Activated naive CD4-positive, alpha-beta T cell treated with anti-CD3 and anti-CD28 coated beads for 36 hours (primary cell): ENCODE measurements at regions of chr5 and their contacts with region 1.

Region 1: DNA sequence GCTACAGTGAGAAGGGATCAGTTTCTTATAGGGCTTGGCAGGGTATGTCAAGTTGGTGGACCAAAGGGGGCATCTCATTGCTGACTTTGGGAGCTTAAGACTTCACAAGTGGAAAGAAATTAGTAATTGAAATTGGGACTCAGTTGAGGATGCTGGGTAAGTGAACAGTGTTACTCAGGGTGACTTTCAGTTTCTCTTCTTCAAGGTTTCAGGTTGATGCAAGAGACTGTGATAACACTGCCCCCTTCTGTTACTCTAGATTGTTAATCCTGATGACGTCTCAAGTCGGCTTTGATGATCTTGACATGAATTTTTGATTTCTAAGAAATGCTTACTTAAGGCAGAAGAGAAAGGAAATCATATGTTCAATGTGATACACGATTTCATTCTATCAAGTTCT is 21.3 kb downstream of the KCTD16 start:
- DNase-seq: peak; percentile 50
- H3K4me3 Mint-ChIP-seq: no peak overlapping the region
- H3K27ac Mint-ChIP-seq: no peak overlapping the region
- H3K4me1 Mint-ChIP-seq: peaks cover 30% of the 10 kb centered on the region
- H3K27me3 Mint-ChIP-seq: no peaks in the 10 kb centered on the region

Region 2: GRCh38 chr5:143008809-143009521 is 1183.0 kb before region 1 on chr5:
- CTCF ChIA-PET with region 1: no interaction called
- intact Hi-C with region 1: loop called (anchors 1 kb)
- DNase-seq: peak; percentile 95
- H3K4me3 Mint-ChIP-seq: no peak overlapping the region
- H3K27ac Mint-ChIP-seq: peak overlapping the region; percentile 85
- H3K4me1 Mint-ChIP-seq: peaks cover 56% of the 10 kb centered on the region
- H3K27me3 Mint-ChIP-seq: no peaks in the 10 kb centered on the region

Region 3: DNA sequence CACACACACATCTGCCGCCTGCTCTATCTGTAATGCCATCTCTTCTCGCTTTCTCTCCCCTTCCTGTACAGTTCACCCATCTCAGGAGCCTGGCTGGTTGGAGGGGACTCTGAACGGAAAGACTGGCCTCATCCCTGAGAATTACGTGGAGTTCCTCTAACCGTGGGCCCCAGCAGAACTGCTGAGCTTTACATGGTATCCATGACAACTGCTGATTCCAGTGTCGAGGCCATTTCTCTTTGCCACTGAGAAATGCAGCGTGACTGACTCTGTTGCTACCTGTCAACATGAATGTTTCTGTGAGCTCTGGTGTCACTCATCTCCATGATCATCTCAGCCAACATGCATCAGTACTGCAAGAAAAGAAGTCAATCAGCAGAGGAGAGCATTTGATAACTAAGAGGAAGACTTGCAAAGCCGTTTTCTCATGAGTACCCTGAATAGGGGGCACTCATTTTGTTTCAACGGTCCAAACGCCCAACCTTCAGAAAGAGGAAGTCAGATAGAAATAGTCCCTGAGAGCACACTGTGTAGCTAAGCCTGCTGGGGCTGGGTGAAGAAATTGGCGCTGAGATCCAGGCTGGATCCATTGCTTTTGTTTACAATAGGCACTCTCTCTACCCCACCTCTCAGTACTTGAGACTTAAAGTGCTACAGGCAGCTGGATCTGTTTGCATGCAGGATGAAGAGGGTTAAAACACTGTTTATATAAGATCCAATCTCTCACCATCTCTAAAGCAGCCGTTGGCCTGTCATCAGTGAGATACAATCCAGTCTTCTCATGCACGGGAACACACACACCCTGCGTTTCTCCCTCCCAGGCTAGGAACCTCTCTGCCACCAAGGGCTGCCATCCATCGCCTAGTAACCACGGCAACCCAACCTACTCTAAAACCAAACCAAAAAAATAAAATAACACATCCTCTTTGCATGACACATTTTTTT is 969.4 kb before region 1 on chr5:
- CTCF ChIA-PET with region 1: no interaction called
- intact Hi-C with region 1: loop called (anchors 5 kb)
- DNase-seq: peak; percentile 56
- H3K4me3 Mint-ChIP-seq: peak overlapping the region; percentile 15
- H3K27ac Mint-ChIP-seq: peak overlapping the region; percentile 78
- H3K4me1 Mint-ChIP-seq: peaks cover 39% of the 10 kb centered on the region
- H3K27me3 Mint-ChIP-seq: no peaks in the 10 kb centered on the region

Region 4: DNA sequence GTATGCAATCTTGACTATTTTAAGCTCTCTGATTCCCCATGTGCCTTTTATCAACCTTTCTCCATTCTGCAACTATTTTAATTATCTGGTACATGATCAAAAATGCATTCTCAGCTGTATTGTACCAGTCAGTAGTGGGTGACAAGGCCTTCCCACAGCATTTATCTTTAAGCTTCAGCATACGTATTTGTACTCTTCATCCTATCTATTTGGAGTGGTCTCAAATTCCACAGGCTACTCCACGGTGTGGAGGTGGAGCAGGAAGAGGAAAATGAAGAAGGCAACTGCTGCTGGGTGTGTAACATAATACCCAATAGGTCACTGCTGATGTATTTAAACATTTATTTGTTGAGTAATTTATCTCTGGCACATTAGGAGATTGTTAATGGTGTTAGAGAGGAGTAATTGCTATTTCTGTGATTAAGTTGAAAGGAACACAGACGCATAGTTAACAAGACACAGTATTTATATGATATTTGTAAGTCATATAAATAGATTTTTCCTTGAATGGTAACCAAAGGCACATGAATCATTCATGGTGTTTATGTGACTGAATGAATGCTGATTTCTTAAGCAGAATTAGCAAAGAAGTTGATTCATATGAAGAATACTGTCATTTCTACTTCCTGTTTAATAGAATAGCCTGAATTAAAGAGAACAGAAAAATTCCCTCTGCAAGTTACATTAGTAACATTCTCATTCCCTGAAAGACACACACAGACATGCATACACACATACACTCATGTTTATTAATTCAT is 634.8 kb before region 1 on chr5:
- CTCF ChIA-PET with region 1: no interaction called
- intact Hi-C with region 1: loop called (anchors 1 kb)
- DNase-seq: no peak
- H3K4me3 Mint-ChIP-seq: no peak overlapping the region
- H3K27ac Mint-ChIP-seq: no peak overlapping the region
- H3K4me1 Mint-ChIP-seq: peaks cover 6% of the 10 kb centered on the region
- H3K27me3 Mint-ChIP-seq: peaks cover 3% of the 10 kb centered on the region

Region 5: DNA sequence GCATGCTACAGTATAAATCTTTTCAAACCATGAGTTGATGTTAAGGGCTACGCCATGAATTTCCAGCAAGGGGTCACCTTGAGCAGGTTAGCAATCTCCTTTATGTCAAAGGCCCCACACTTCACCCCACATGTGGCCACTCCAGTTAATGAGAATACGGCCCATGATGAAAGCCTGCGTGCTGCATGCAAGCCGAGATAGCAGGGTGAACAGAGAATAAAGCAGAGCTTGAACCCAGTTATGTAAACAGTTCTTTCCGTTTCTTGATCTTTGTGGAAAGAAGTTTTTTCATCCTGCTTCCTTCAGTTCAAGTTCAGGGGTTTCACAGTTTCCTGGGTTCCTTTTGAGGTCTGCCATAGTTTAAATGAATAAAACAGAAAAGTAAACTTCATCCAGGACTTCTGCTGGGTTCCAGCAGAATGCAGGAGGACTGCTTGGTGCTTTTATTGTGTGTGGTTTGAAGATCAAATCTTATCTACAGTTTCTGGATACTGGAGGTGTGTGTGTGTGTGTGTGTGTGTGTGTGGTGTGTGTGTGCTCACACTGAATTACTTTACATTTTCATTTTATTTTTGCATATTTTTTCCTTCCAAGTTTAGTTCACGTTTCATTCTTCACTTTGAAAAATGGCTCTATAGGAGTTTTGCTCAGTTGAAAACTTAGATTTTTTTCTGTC is 292.9 kb before region 1 on chr5:
- CTCF ChIA-PET with region 1: interaction called, 3 read pairs
- intact Hi-C with region 1: loop called (anchors 2 kb)
- DNase-seq: no peak
- H3K4me3 Mint-ChIP-seq: no peak overlapping the region
- H3K27ac Mint-ChIP-seq: peak overlapping the region; percentile 42
- H3K4me1 Mint-ChIP-seq: peaks cover 32% of the 10 kb centered on the region
- H3K27me3 Mint-ChIP-seq: no peaks in the 10 kb centered on the region

Region 6: DNA sequence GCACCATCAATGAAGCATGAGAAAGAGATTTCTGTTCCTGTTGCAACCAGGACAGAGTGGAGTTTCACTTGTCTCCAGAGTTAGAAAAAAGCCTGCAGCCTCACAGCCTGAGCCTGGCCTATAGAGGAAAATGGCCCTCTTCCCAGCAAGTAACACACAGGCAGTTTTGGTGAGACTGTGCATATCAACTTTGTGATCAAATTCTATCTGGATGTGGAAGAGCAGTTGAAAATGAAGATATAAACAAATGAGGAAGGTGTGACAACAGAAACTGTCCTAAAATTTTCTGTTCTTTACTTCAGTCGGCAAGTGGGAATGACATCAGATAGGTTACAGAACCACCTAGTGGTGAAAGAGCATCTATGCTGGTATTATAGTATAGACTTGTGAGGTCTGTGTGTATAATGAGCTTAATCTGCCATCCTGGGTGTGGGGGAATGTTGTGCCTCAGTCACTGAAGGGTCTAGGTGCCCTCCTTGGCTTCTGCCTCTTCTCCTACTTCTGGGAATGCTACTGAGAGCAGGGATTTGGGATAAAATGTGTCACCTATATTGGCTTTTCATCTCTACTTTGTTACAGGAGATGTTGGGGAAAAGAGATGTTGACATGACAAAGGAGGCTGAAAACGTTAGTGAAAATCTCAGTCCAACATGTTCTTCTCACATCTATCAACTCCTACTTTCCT is 49.7 kb before region 1 on chr5:
- CTCF ChIA-PET with region 1: interaction called, 9 read pairs
- intact Hi-C with region 1: loop called (anchors 2 kb)
- DNase-seq: no peak
- H3K4me3 Mint-ChIP-seq: no peak overlapping the region
- H3K27ac Mint-ChIP-seq: no peak overlapping the region
- H3K4me1 Mint-ChIP-seq: peaks cover 2% of the 10 kb centered on the region
- H3K27me3 Mint-ChIP-seq: no peaks in the 10 kb centered on the region

Region 7: DNA sequence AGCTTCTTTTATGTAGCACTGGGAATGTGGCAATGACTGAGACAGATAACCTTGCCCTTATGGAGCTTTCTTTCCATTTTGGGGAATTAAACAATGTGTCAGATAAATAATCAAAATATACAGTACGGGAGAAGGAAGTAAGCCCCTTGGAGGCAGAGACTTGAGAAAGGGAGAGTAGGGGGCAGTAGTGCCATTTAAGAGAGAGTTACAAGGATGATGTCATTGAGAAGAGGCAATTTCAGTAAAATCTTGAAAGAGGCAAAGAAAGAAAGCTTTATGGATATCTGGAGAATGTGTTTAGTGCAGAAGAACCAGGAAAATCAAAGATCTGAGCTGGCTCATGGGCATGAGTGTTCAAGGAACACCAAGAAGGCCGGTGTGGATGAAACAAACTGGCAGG is 56.0 kb after region 1 on chr5:
- CTCF ChIA-PET with region 1: no interaction called
- intact Hi-C with region 1: no loop called
- DNase-seq: no peak
- H3K4me3 Mint-ChIP-seq: no peak overlapping the region
- H3K27ac Mint-ChIP-seq: no peak overlapping the region
- H3K4me1 Mint-ChIP-seq: no peaks in the 10 kb centered on the region
- H3K27me3 Mint-ChIP-seq: peaks cover 18% of the 10 kb centered on the region

Region 8: DNA sequence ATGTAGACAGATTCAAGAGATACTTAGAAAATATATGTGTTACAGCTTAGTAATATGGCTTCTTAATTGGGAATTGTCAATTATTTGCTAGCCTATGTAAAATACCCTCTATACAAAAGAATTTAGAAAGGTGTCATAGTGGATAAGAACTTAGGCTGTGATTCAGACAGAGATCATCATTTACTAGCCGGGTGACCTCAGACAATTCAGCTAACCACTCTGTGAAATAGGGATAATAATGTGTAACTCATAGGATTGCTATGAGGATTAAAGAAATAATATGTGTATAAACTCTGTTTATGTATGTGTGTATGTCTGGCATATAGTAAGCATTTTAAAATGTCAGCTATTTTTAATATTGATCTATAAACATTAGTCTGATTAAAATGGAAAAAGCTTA is 1996.4 kb after region 1 on chr5:
- CTCF ChIA-PET with region 1: no interaction called
- intact Hi-C with region 1: loop called (anchors 2 kb)
- DNase-seq: no peak
- H3K4me3 Mint-ChIP-seq: no peak overlapping the region
- H3K27ac Mint-ChIP-seq: no peak overlapping the region
- H3K4me1 Mint-ChIP-seq: peaks cover 9% of the 10 kb centered on the region
- H3K27me3 Mint-ChIP-seq: peaks cover 5% of the 10 kb centered on the region